CD14-positive monocyte (primary cell): ENCODE measurements at regions of chr4 and their contacts with region 1.

Region 1: DNA sequence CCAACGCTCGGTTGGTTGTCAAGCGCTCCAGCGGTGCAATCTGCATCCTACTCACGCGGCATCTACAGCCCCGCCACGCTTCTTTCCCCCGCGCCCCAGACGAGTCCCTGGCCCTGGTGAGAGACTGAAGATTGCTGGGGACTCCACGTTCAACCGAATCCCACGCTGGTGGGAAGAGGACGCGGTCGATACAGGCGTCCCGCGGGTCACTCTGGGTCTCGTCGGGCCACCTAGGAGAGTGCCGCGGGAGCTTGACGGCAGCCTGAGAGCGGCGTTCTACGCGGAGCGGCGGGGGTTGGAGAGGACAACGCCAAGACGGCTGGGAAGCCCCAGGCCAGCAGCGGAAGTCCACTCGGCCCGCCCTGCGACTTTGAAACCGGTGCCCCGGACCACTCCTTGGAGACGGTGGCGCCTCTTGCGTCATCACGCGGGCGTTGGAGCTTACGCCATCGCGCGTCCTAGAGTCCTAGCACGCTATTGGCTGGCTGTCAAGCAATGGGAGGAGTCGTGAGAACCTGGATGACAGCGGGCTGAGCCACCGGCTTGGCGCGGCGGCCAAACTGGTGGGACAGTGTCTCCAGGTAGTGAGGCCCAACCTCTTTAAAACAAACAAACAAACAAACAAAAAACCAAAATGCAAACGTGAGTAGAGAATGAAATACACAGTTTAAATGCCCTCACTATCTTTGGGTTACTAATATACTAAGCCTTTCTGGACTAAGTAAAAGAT is at the start of gene SCLT1:
- DNase-seq: peak; percentile 99
- H3K4me3 ChIP-seq: peak within 1 kb of the TSS; percentile 73 to 81 (median 81)
- H3K4me3 Mint-ChIP-seq: peak within 1 kb of the TSS in 1 of 2 donors; percentile 44
- H3K27ac ChIP-seq: peak within 1 kb of the TSS; percentile 97 to 99
- H3K27ac Mint-ChIP-seq: peak within 1 kb of the TSS in 2 of 7 donors; percentile 35 to 88
- H3K4me1 ChIP-seq: peaks cover 38 to 61% of the 10 kb centered on the region in 2 donors
- H3K4me1 Mint-ChIP-seq: peaks cover 43% of the 10 kb centered on the region
- H3K27me3 ChIP-seq: no peaks in the 10 kb centered on the region
- H3K27me3 Mint-ChIP-seq: peaks cover 0 to 1% (median 0%) of the 10 kb centered on the region in 3 donors
- CTCF ChIP-seq: no peak
- polyA plus RNA-seq, gene SCLT1: 14.8 to 20.1 (median 17.9) TPM

Region 2: DNA sequence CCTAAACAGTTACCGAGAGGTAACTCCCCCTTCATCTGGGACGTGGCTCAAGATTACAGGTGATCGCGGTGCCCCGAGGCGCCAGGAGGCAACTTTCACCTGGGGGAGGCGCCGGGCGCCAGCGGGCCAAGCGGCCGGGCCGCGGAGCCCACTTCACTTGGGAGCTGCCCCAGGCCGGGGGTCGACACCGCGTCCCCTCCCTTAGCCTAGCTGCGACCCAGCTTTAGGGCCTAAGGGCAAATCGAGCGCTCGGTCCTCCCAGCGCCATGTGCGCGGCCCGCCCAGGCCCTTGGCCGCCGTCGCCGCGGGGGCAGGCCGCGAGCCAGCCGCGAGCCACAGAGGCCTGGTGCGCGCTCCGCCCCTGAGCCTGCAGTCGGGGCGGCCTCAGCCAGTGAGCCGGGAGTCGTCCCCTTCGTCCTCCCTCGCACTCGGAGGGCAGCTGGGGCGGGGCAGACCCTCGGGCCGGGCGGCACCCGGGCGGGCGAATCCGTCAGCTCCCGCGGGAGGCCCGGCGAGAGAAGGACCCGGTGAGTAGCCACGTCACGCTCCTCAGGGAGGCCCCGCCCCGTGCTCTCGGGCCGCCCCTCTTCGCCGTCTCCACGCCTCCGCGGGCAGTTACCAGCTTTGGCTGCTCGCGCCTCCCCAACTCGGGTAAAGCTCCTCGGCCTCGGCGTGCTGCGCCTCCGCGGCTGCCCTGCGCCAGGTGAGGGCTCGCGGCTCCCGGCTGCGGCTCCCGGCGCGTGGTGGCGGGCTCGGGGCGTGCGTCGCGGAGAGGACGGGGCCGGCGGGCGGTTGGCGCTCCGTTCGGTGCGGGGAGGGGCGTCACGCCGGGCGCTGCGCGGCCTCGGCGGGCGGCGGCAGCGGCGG is 1032.4 kb before region 1 on chr4 and contains the start of gene LARP1B:
- intact Hi-C with region 1: loop called in 1 of 2 experiments (anchors 10 kb)
- DNase-seq: peak; percentile 85 to 89 (median 85)
- H3K4me3 ChIP-seq: peak within 1 kb of the TSS; percentile 51 to 82 (median 52)
- H3K4me3 Mint-ChIP-seq: peak within 1 kb of the TSS; percentile 85 to 92
- H3K27ac ChIP-seq: peak within 1 kb of the TSS; percentile 55 to 75
- H3K27ac Mint-ChIP-seq: peak within 1 kb of the TSS; percentile 71 to 92 (median 87)
- H3K4me1 ChIP-seq: peaks cover 10 to 20% of the 10 kb centered on the region in 2 donors
- H3K4me1 Mint-ChIP-seq: peaks cover 13% of the 10 kb centered on the region
- H3K27me3 ChIP-seq: no peaks in the 10 kb centered on the region
- H3K27me3 Mint-ChIP-seq: peaks cover 0 to 5% (median 2%) of the 10 kb centered on the region in 3 donors
- CTCF ChIP-seq: no peak
- polyA plus RNA-seq, gene LARP1B: 3.0 to 5.7 (median 3.7) TPM

Region 3: DNA sequence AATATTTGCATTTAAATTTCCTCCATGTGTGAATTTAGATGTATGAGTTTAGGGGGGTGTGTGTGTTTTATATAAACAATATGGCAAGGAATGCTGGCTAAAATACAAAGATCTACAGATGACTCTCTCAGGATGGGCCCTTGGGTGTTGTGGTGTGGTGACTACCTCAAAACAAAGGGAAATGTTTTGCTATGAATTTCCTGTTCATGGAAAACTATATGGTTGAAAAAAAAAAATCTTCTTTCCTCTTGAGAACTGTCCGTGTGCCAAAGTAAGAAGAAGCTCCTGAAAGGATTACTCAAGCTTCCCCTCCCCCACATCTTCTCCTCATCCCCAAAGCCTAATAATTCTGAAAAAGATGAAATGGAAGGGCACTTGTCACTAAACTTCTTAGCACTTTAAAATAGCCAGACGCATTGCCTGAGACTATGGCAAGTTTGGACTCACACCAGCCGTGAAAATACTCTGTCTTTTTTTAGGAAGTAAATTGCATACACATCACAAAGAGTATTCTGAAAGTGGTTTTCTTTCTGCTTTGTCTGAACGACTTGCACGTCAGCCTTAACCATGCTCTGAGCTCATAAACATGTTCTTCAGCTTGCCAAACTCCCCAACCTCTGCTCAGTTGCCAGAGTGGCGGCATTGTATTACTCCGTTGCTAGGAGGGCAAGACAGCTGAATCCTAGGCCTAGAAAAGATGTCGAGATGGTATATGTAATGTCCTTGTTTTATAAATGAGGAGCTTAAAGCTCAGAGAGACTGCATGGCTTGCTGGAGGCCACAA is 534.3 kb before region 1 on chr4:
- intact Hi-C with region 1: loop called in 1 of 2 experiments (anchors 10 kb)
- DNase-seq: no peak
- H3K4me3 ChIP-seq: no peak overlapping the region
- H3K4me3 Mint-ChIP-seq: peak overlapping the region in 1 of 2 donors; percentile 63
- H3K27ac ChIP-seq: no peak overlapping the region
- H3K27ac Mint-ChIP-seq: peak overlapping the region in 3 of 7 donors; percentile 0 to 34 (median 21)
- H3K4me1 ChIP-seq: peaks cover 18 to 20% of the 10 kb centered on the region in 2 donors
- H3K4me1 Mint-ChIP-seq: peaks cover 21% of the 10 kb centered on the region
- H3K27me3 ChIP-seq: no peaks in the 10 kb centered on the region
- H3K27me3 Mint-ChIP-seq: peaks cover 0 to 3% (median 3%) of the 10 kb centered on the region in 3 donors
- CTCF ChIP-seq: no peak

Region 4: GRCh38 chr4:128916832-128917231 is 176.5 kb before region 1 on chr4:
- intact Hi-C with region 1: loop called (anchors 10 kb)
- DNase-seq: peak; percentile 83 to 90 (median 88)
- H3K4me3 ChIP-seq: peak overlapping the region in 1 of 3 experiments; percentile 54
- H3K4me3 Mint-ChIP-seq: peak overlapping the region in 1 of 2 donors; percentile 75
- H3K27ac ChIP-seq: peak overlapping the region; percentile 73 to 92
- H3K27ac Mint-ChIP-seq: peak overlapping the region; percentile 89 to 98 (median 95)
- H3K4me1 ChIP-seq: peaks cover 60 to 68% of the 10 kb centered on the region in 2 donors
- H3K4me1 Mint-ChIP-seq: peaks cover 68% of the 10 kb centered on the region
- H3K27me3 ChIP-seq: no peaks in the 10 kb centered on the region
- H3K27me3 Mint-ChIP-seq: no peaks in the 10 kb centered on the region
- CTCF ChIP-seq: no peak

Region 5: GRCh38 chr4:129117705-129118104 is 24.3 kb after region 1 on chr4:
- intact Hi-C with region 1: no loop called
- DNase-seq: no peak
- H3K4me3 ChIP-seq: no peak overlapping the region
- H3K4me3 Mint-ChIP-seq: no peak overlapping the region
- H3K27ac ChIP-seq: no peak overlapping the region
- H3K27ac Mint-ChIP-seq: peak overlapping the region in 1 of 7 donors; percentile 4
- H3K4me1 ChIP-seq: no peaks in the 10 kb centered on the region
- H3K4me1 Mint-ChIP-seq: peaks cover 1% of the 10 kb centered on the region
- H3K27me3 ChIP-seq: no peaks in the 10 kb centered on the region
- H3K27me3 Mint-ChIP-seq: peaks cover 0 to 1% (median 1%) of the 10 kb centered on the region in 3 donors
- CTCF ChIP-seq: no peak